Activated CD4-positive, alpha-beta T cell treated with anti-CD3 and anti-CD28 coated beads, Interleukin-2, amount 10 ng/mL, durations not matched to agents 24 days and 14 days (primary cell): ENCODE measurements at regions of chr14 and their contacts with region 1.

Region 1: GRCh38 chr14:69673578-69674305 is 62.3 kb downstream of the SUSD6 start:
- DNase-seq: peak; percentile 72
- H3K4me3 Mint-ChIP-seq: peak overlapping the region; percentile 80
- H3K27ac Mint-ChIP-seq: peak overlapping the region; percentile 98
- H3K4me1 Mint-ChIP-seq: peaks cover 83% of the 10 kb centered on the region
- H3K27me3 Mint-ChIP-seq: no peaks in the 10 kb centered on the region

Region 2: DNA sequence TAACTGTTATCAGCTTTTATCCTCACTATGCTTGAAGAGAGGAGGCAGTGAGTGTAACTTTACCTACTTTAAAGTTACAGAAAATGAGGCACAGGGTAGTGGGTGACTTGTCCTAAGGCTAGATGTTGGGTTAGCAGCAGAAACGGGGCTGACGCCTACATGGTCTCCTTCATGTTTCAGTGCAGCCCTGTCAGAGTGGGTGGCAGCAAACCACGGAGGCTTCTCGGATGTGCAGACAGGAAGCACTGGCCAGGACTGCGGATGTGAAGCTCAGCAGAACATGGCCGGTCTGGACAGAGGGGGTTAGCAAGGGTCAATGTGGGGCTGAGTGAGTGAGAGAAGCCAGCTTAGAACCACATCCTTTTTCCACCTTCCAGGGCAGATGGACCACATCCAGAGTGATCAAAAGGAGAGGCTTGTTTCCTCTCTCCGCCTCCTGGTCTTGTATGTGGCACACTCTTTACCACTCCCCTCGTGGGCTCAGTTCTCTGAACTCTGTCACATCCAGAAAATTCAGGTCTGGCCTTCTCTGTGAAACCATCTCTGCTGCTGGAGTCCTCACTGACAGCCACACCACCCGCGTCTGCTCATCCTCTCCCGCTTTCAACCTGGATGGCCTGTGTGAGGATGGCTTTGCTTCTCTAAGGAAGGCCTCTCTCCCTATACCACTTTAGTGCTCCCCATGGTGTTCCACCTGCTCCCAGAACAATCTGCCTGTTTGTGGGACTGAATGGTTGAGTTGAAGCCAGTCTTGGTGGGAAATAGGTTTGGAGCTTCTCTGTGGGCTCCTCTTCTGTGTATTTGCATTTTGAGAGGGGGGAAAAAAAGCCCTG is 48.2 kb before region 1 on chr14:
- intact Hi-C with region 1: loop called (anchors 1 kb)
- DNase-seq: peak; percentile 93
- H3K4me3 Mint-ChIP-seq: peak overlapping the region; percentile 81
- H3K27ac Mint-ChIP-seq: peak overlapping the region; percentile 96
- H3K4me1 Mint-ChIP-seq: peaks cover 80% of the 10 kb centered on the region
- H3K27me3 Mint-ChIP-seq: no peaks in the 10 kb centered on the region

Region 3: GRCh38 chr14:69657950-69658355 is 15.8 kb before region 1 on chr14:
- intact Hi-C with region 1: loop called (anchors 1 kb)
- DNase-seq: no peak
- H3K4me3 Mint-ChIP-seq: no peak overlapping the region
- H3K27ac Mint-ChIP-seq: peak overlapping the region; percentile 90
- H3K4me1 Mint-ChIP-seq: peaks cover 70% of the 10 kb centered on the region
- H3K27me3 Mint-ChIP-seq: no peaks in the 10 kb centered on the region

Region 4: DNA sequence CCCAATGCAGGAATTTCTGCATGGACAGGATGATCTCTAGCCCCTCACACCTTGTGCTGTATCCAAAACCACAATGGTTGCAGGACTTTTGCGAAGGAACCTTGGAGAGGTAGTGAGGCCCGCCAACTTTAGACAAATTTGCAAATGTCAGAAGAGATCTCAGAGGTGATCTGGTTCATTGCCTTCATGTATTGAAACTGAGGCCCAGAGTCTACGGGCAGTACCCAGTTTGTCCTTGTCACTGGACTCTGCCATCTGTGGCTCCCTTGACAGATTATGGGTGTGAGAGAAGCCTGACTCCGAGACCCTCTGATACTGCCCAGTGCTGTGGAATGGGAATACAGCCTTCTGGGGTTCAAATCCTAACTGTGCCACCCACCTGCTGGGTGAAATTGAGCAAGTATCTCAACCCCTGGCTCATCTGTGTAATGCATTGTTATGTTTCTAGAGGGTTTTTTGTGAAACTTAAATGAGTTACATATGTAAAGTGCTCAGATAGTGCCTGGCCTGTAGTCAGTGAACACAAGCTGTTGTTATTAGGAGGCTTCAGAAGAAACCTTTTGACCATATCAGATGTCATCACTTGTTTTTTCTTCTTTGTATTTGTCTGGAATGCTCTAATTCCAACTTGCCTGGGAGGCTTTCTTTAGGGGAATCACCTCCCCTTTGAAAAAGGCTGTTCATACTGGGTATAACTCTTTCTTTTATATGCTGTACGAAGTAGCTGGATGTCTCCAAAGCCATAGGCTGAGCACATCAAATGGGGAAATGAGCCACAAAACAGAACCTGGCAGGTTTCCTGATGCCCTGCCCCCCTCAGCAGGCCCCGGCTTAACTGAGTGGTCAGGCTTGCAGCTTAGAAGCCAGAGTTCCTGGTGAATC is 21.8 kb after region 1 on chr14:
- intact Hi-C with region 1: loop called (anchors 1 kb)
- DNase-seq: no peak
- H3K4me3 Mint-ChIP-seq: peak overlapping the region; percentile 53
- H3K27ac Mint-ChIP-seq: peak overlapping the region; percentile 71
- H3K4me1 Mint-ChIP-seq: peaks cover 72% of the 10 kb centered on the region
- H3K27me3 Mint-ChIP-seq: no peaks in the 10 kb centered on the region

Region 5: DNA sequence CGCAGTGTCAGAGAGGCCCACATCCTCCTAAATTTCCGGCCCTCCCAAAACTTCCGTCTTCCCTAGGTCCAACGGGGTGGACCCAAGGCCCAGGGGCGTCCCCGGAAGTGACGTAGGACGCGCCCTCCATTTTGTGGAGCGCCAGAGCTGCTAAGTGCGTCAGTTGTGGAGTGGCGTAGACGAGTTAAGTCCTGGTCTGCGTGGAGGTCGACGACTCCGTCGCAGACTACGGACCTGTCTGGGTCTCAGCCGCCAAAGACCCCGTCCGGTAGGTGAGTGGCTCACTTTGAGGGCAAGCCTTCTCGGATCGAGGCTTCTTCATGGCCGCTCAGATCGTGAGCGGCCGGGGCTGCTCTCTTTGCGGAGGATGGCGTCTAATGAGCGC is 93.2 kb after region 1 on chr14 and contains the start of gene SRSF5:
- intact Hi-C with region 1: loop called (anchors 2 kb)
- DNase-seq: peak; percentile 99
- H3K4me3 Mint-ChIP-seq: peak within 1 kb of the TSS; percentile 99
- H3K27ac Mint-ChIP-seq: peak within 1 kb of the TSS; percentile 100
- H3K4me1 Mint-ChIP-seq: peaks cover 56% of the 10 kb centered on the region
- H3K27me3 Mint-ChIP-seq: peaks cover 5% of the 10 kb centered on the region
- total RNA-seq, gene SRSF5: 319 and 322 TPM in 2 replicates

Region 6: DNA sequence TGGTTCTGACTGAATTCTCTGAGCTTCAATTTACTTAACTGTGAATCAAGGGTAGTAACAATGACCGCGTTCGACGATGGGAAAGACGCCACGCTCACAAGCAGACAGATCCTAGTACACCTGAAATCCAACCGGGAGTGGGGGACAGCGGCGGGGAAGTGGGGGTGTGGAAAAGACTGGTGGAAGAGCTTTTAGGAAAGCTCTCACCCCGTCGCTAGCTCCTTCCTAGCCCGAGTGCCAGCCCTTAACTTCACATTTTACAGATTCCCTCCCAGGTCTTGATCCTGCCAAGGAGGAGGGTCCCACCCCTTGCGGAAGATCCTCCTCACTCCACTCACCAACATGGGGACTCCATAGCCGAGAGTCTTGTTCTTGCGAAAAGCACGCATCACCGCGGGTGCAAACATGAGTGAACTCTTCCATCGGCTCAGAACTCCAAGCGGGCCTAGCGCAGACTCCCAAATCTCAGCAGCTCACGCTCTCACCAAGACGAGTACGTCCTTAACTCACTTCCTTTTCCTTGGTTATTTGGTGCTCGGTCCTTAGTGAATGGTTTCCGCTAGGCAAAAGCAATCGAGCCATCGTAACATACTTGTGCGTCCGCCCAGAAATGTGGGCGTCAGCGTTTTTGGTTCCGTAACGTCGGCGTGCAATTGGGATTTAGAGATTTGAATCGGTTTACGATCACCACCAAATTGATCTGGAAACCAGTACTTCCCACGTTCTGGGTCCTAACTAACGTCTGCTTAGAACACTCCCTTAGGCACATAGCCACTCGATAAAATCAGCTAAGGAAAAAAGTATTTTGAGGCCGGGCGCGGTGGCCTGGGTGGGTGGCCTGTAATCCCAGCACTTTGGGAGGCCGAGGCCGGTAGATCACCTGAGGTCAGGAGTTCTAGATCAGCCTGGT is 685.7 kb after region 1 on chr14 and contains the start of gene COX16:
- intact Hi-C with region 1: no loop called
- DNase-seq: peak; percentile 95
- H3K4me3 Mint-ChIP-seq: peak within 1 kb of the TSS; percentile 98
- H3K27ac Mint-ChIP-seq: peak within 1 kb of the TSS; percentile 91
- H3K4me1 Mint-ChIP-seq: peaks cover 18% of the 10 kb centered on the region
- H3K27me3 Mint-ChIP-seq: peaks cover 6% of the 10 kb centered on the region
- total RNA-seq, gene COX16: 65.8 and 79.0 TPM in 2 replicates